H1 (cell line): ENCODE measurements at regions of chr17 and their contacts with region 1.

Region 1: DNA sequence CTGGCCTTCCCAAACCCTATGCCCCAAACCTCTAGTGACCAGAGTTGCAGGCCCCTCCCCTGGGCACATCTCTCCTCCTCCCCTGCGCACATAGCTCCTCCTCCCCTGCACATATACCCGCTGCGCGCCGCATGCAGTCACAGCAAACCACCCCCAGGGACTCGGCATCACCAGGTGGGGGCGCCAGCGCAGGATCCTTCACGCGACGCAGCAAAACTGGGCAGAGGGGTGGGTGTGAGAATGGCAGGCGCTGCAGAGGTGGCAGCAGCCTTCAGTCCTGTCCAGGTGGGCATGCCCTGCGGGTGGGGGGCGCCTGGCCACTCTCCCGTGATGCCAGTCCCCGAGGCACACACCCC is 5.6 kb downstream of the CORO6 start:
- DNase-seq: peak in 1 of 2 experiments; percentile 91
- H3K4me3 ChIP-seq: peak overlapping the region; percentile 3 to 60 (median 30); a peak in 5 of 8 replicates
- H3K27ac ChIP-seq: no peak overlapping the region
- H3K4me1 ChIP-seq: peaks cover 14 to 49% (median 40%) of the 10 kb centered on the region in 4 experiments
- H3K27me3 ChIP-seq: peaks cover 22 to 75% (median 61%) of the 10 kb centered on the region in 4 experiments
- CTCF ChIP-seq: peak; percentile 70 to 86 (median 74)
- EP300 ChIP-seq: no peak; a peak in 1 of 3 replicates
- POLR2A ChIP-seq: no peak
- RAD21 ChIP-seq: peak; percentile 27 to 52; a peak in 3 of 4 replicates

Region 2: DNA sequence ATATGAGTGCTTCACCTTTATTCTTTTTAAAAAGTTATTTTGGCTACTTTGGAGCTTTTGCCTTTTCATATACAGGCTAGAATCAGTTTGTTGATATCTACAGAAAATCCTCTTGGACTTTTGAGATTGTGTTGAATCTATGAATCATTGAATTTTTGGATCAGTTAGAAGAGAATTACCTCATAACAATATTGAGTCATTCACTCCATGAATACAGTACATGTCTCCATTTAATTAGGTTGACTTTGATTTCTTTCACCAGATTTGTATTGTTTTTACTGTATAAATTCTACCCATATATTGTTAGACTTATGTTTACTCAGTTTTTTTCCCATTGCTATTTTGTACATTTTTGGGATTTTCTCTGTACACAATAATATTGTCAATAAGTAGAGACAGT is 172.5 kb before region 1 on chr17:
- CTCF ChIA-PET with region 1: no interaction called
- POLR2A ChIA-PET with region 1: no interaction called
- DNase-seq: no peak
- H3K4me3 ChIP-seq: no peak overlapping the region
- H3K27ac ChIP-seq: no peak overlapping the region
- H3K4me1 ChIP-seq: no peaks in the 10 kb centered on the region; a peak in 1 of 7 replicates
- H3K27me3 ChIP-seq: no peaks in the 10 kb centered on the region
- CTCF ChIP-seq: no peak
- EP300 ChIP-seq: no peak
- POLR2A ChIP-seq: no peak
- RAD21 ChIP-seq: no peak

Region 3: DNA sequence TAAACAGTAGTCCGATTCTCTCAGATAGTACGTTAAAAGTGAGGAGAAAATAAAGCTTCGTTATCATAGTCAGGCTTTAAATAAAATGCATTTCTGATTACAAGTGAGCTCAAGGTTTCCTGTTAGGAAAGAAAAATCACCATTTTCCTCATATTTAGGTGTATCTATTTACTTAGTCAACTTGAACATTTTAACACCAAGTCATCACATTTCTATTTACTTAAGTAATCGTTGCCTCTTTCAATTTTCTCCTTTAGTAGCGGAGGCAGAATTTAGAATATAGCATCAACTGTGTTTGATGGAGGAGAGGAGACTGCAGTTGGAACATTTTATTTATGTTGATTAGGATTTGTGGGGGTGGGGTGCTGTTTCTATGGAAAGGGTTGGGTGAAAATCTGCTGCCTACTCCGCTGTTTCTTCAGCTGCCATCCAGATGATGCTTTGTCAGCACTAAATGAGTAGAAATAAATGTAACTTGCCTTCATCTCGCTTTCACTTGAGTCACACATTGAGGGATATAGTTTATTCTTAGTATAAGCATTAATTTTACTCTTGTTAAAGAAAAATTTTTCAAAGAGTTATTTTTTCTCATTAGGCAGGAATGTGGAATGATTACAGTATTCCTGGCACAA is 92.5 kb before region 1 on chr17:
- CTCF ChIA-PET with region 1: no interaction called
- POLR2A ChIA-PET with region 1: no interaction called
- DNase-seq: no peak
- H3K4me3 ChIP-seq: no peak overlapping the region
- H3K27ac ChIP-seq: no peak overlapping the region
- H3K4me1 ChIP-seq: no peaks in the 10 kb centered on the region
- H3K27me3 ChIP-seq: no peaks in the 10 kb centered on the region
- CTCF ChIP-seq: no peak
- EP300 ChIP-seq: no peak
- POLR2A ChIP-seq: no peak
- RAD21 ChIP-seq: no peak

Region 4: GRCh38 chr17:29568331-29569244 is 48.5 kb before region 1 on chr17 and contains the start of gene TP53I13:
- CTCF ChIA-PET with region 1: interaction called, 99 read pairs
- POLR2A ChIA-PET with region 1: interaction called, 5 read pairs
- DNase-seq: peak in 1 of 2 experiments; percentile 87
- H3K4me3 ChIP-seq: peak within 1 kb of the TSS; percentile 66 to 76 (median 72)
- H3K27ac ChIP-seq: no peak within 1 kb of the TSS
- H3K4me1 ChIP-seq: peaks cover 6 to 15% (median 11%) of the 10 kb centered on the region in 4 experiments; a peak in 6 of 7 replicates
- H3K27me3 ChIP-seq: peaks cover 11 to 48% (median 34%) of the 10 kb centered on the region in 4 experiments
- CTCF ChIP-seq: no peak
- EP300 ChIP-seq: no peak
- POLR2A ChIP-seq: no peak
- RAD21 ChIP-seq: no peak
- total RNA-seq, gene TP53I13: 21.1 and 22.4 TPM in 2 replicates

Region 5: GRCh38 chr17:29579866-29580771 is 37.0 kb before region 1 on chr17:
- CTCF ChIA-PET with region 1: interaction called, 193 read pairs
- POLR2A ChIA-PET with region 1: no interaction called
- DNase-seq: peak in 1 of 2 experiments; percentile 92
- H3K4me3 ChIP-seq: no peak overlapping the region
- H3K27ac ChIP-seq: no peak overlapping the region
- H3K4me1 ChIP-seq: peaks cover 2 to 11% (median 5%) of the 10 kb centered on the region in 4 experiments; a peak in 6 of 7 replicates
- H3K27me3 ChIP-seq: no peaks in the 10 kb centered on the region
- CTCF ChIP-seq: peak; percentile 90 to 99 (median 98)
- EP300 ChIP-seq: no peak
- POLR2A ChIP-seq: no peak
- RAD21 ChIP-seq: peak; percentile 94 to 95

Region 6: GRCh38 chr17:29589524-29590410 is 27.3 kb before region 1 on chr17 and contains the start of gene GIT1:
- CTCF ChIA-PET with region 1: interaction called, 193 read pairs
- POLR2A ChIA-PET with region 1: interaction called, 30 read pairs
- DNase-seq: peak in 1 of 2 experiments; percentile 87
- H3K4me3 ChIP-seq: peak within 1 kb of the TSS; percentile 64 to 82 (median 75)
- H3K27ac ChIP-seq: no peak within 1 kb of the TSS
- H3K4me1 ChIP-seq: peaks cover 4 to 45% (median 38%) of the 10 kb centered on the region in 4 experiments
- H3K27me3 ChIP-seq: peaks cover 0 to 6% (median 5%) of the 10 kb centered on the region in 4 experiments; a peak in 2 of 7 replicates
- CTCF ChIP-seq: peak in 1 of 3 experiments; percentile 13; a peak in 1 of 4 replicates
- EP300 ChIP-seq: peak in 1 of 2 experiments; percentile 25; a peak in 1 of 3 replicates
- POLR2A ChIP-seq: no peak; a peak in 1 of 3 replicates
- RAD21 ChIP-seq: no peak
- total RNA-seq, gene GIT1: 60.6 and 62.4 TPM in 2 replicates

Region 7: GRCh38 chr17:29597361-29598172 is 19.5 kb before region 1 on chr17:
- CTCF ChIA-PET with region 1: interaction called, 95 read pairs
- POLR2A ChIA-PET with region 1: interaction called, 30 read pairs
- DNase-seq: peak in 1 of 2 experiments; percentile 54
- H3K4me3 ChIP-seq: peak overlapping the region in 2 of 4 experiments; percentile 5 to 20; a peak in 3 of 8 replicates
- H3K27ac ChIP-seq: no peak overlapping the region
- H3K4me1 ChIP-seq: peaks cover 10 to 40% (median 27%) of the 10 kb centered on the region in 4 experiments
- H3K27me3 ChIP-seq: no peaks in the 10 kb centered on the region
- CTCF ChIP-seq: no peak
- EP300 ChIP-seq: no peak
- POLR2A ChIP-seq: no peak
- RAD21 ChIP-seq: no peak

Region 8: GRCh38 chr17:29640413-29640812 is 23.3 kb after region 1 on chr17:
- CTCF ChIA-PET with region 1: interaction called, 68 read pairs
- POLR2A ChIA-PET with region 1: interaction called, 3 read pairs
- DNase-seq: no peak
- H3K4me3 ChIP-seq: no peak overlapping the region
- H3K27ac ChIP-seq: no peak overlapping the region
- H3K4me1 ChIP-seq: peaks cover 0 to 10% (median 3%) of the 10 kb centered on the region in 4 experiments; a peak in 3 of 7 replicates
- H3K27me3 ChIP-seq: no peaks in the 10 kb centered on the region
- CTCF ChIP-seq: no peak
- EP300 ChIP-seq: no peak
- POLR2A ChIP-seq: no peak
- RAD21 ChIP-seq: no peak